Sigmoid colon (tissue), 7 donors: ENCODE measurements at regions of chr13 and their contacts with region 1.

Region 1: GRCh38 chr13:37869756-37870488 is at the start of gene TRPC4:
- DNase-seq: peak; percentile 77
- H3K4me3 ChIP-seq: peak within 1 kb of the TSS; percentile 62 to 81 (median 73)
- H3K27ac ChIP-seq: peak within 1 kb of the TSS in 3 of 4 donors; percentile 72 to 83 (median 79)
- H3K4me1 ChIP-seq: peaks cover 0 to 31% (median 0%) of the 10 kb centered on the region in 4 donors
- H3K27me3 ChIP-seq: no peaks in the 10 kb centered on the region
- CTCF ChIP-seq: peak in 3 of 4 experiments; percentile 38 to 63 (median 48)
- EP300 ChIP-seq: no peak
- POLR2A ChIP-seq: no peak
- total RNA-seq, gene TRPC4: 8.1 to 11.8 (median 11.2) TPM

Region 2: GRCh38 chr13:37640499-37640898 is 229.4 kb before region 1 on chr13:
- intact Hi-C with region 1: loop called (anchors 10 kb)
- DNase-seq: no peak
- H3K4me3 ChIP-seq: no peak overlapping the region
- H3K27ac ChIP-seq: no peak overlapping the region
- H3K4me1 ChIP-seq: no peaks in the 10 kb centered on the region
- H3K27me3 ChIP-seq: no peaks in the 10 kb centered on the region
- CTCF ChIP-seq: peak in 2 of 4 experiments; percentile 35 to 52
- EP300 ChIP-seq: no peak
- POLR2A ChIP-seq: no peak

Region 3: DNA sequence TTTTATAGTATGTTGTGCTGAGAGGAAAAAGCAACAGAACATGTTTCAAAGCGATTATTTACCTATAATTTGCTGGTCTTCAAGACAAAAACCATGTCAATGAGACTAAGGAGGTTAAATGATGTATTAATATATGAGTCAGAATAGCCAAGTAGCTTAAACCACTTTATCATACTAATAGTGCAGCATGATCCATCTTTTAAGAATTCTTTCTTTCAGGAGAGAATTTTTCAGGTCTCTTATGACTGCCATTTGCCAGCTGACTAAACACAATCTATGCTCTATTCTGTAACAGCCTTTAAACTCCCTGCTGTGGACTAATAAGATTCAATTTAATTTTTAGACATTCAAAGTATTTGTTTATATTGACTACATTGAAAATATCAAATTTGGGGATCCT is 94.1 kb before region 1 on chr13:
- intact Hi-C with region 1: loop called (anchors 10 kb)
- DNase-seq: no peak
- H3K4me3 ChIP-seq: no peak overlapping the region
- H3K27ac ChIP-seq: no peak overlapping the region
- H3K4me1 ChIP-seq: peaks cover 0 to 33% (median 20%) of the 10 kb centered on the region in 4 donors
- H3K27me3 ChIP-seq: no peaks in the 10 kb centered on the region
- CTCF ChIP-seq: no peak
- EP300 ChIP-seq: no peak
- POLR2A ChIP-seq: no peak

Region 4: DNA sequence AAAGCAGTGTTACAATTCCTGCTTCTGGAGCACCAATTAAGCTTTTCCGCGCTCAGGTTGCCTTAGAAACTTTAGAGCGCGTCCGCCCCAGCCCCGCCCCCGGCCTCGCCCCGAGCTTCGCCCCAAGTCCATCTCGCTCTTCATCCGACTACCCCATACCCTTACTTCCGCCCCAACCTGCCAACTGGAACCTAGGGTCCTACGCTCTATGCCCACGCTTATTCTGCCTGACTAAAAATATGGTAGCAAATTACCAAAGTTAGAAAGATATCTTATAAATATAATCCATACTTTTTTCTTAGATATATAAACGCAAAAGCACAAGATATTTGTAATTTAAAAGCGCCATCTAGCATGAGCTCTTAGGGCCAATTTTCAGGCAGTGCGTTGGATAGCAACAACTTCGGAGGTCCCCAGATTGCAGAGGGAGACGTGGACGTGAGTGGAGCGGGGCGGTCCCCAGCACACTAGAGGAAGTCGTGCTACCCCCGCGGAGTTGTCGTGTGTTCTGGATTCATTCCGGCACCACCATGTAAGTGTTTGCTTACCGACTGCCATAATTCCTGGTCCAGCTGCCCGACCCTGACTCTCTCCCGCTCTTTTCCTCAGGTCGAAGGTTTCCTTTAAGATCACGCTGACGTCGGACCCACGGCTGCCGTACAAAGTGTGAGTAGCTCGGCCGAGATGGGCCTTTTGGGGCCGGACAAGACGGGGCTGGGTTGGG is 479.6 kb after region 1 on chr13 and contains the start of gene UFM1:
- intact Hi-C with region 1: loop called (anchors 5 kb)
- DNase-seq: peak; percentile 94
- H3K4me3 ChIP-seq: peak within 1 kb of the TSS; percentile 66 to 79 (median 72)
- H3K27ac ChIP-seq: peak within 1 kb of the TSS; percentile 83 to 91 (median 86)
- H3K4me1 ChIP-seq: peaks cover 0 to 36% (median 21%) of the 10 kb centered on the region in 4 donors
- H3K27me3 ChIP-seq: no peaks in the 10 kb centered on the region
- CTCF ChIP-seq: no peak
- EP300 ChIP-seq: peak in 1 of 4 donors; percentile 5
- POLR2A ChIP-seq: peak in 1 of 2 donors; percentile 56
- total RNA-seq, gene UFM1: 45.4 to 60.6 (median 52.8) TPM